Endothelial cell of umbilical vein (primary cell): ENCODE measurements at regions of chr6 and their contacts with region 1.

Region 1: GRCh38 chr6:111663692-111664564 is 58.2 kb upstream of the TRAF3IP2 start:
- DNase-seq: peak; percentile 38
- H3K4me3 ChIP-seq: no peak overlapping the region
- H3K27ac ChIP-seq: no peak overlapping the region
- H3K4me1 ChIP-seq: peaks cover 27% of the 10 kb centered on the region
- H3K27me3 ChIP-seq: no peaks in the 10 kb centered on the region
- CTCF ChIP-seq: no peak
- POLR2A ChIP-seq: no peak

Region 2: DNA sequence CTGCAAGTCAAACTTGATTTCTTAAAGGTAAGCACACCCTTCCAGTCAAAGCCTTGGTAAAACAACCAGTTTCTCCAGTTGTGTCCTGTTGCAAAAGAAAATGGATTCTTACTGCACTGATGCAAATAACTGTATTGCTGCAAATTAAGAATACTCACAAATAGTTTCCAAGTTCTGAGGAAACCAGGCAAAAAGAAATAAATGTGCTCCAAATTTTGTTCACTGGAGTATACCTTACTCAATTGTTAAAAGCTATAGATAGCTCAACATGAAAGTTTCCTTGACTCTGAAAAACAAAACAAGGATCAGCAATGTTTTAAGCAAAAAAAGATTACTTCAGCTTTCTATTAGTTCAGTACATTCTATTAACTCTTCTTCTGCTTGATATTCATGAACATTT is 501.4 kb before region 1 on chr6:
- CTCF ChIA-PET with region 1: no interaction called
- POLR2A ChIA-PET with region 1: no interaction called
- dilution Hi-C with region 1: no loop called
- intact Hi-C with region 1: no loop called
- DNase-seq: no peak
- H3K4me3 ChIP-seq: no peak overlapping the region
- H3K27ac ChIP-seq: no peak overlapping the region
- H3K4me1 ChIP-seq: no peaks in the 10 kb centered on the region
- H3K27me3 ChIP-seq: peaks cover 4 to 5% of the 10 kb centered on the region in 2 experiments
- CTCF ChIP-seq: no peak
- POLR2A ChIP-seq: no peak

Region 3: DNA sequence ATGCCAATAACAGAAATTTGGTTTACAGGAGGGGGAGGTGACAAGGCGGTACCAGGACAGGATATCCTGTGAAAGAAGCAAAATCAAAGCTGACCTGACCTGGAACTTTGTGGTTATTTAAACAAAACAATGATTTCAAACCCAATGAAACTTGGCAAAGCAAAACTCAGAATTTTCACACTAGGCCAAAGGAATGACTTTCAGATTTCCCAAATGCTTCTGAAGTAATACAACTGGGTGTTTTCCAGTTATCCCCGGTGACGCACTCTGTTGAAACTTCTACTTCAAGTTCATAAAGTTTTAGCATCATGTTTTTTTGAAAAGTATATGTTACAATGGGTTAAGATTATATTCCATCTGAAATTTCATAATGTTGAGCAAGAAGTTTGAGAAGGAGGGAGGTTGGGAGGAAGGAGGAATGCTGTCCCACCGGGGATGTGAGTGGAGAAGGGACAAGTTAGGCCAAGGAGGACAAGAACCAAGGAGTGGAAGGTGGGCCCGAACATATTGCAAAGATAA is 19.9 kb after region 1 on chr6:
- CTCF ChIA-PET with region 1: interaction called, 24 read pairs
- POLR2A ChIA-PET with region 1: no interaction called
- dilution Hi-C with region 1: no loop called
- intact Hi-C with region 1: loop called (anchors 2 kb)
- DNase-seq: peak; percentile 91
- H3K4me3 ChIP-seq: peak overlapping the region in 1 of 3 experiments; percentile 1
- H3K27ac ChIP-seq: peak overlapping the region; percentile 82
- H3K4me1 ChIP-seq: peaks cover 51% of the 10 kb centered on the region
- H3K27me3 ChIP-seq: no peaks in the 10 kb centered on the region
- CTCF ChIP-seq: no peak
- POLR2A ChIP-seq: no peak